Activated CD4-positive, alpha-beta T cell treated with anti-CD3 and anti-CD28 coated beads for 36 hours (primary cell): ENCODE measurements at regions of chr3 and their contacts with region 1.

Region 1: GRCh38 chr3:188749010-188749617 is 422.7 kb upstream of the TPRG1 start:
- DNase-seq: peak; percentile 59
- ATAC-seq: no peak
- H3K4me3 Mint-ChIP-seq: no peak overlapping the region
- H3K27ac Mint-ChIP-seq: no peak overlapping the region
- H3K4me1 Mint-ChIP-seq: peaks cover 30% of the 10 kb centered on the region
- H3K27me3 Mint-ChIP-seq: no peaks in the 10 kb centered on the region

Region 2: DNA sequence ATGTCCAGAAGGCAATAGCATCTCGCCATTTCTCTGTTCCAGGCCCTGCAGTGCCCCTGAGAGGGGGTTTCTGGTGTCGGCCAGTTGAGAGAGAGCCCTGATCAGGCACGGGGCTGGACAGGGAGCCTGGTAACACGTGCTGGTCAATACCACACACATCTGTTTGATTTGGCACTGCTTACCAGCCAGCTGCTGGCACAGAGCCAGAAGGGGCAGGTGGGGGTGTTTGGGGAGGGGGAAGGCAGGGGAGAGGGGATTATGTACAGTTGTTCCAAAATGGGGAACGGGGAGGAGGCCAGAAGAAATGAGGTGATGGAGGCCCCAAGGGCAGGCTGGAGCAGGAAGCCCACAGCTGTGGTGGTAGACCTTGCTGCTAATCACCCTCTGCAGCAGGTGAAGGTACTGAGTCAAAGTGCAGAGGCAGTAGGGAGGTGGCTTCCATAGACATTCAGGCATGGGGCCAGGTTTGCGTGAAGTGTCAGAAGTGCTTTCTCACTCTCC is 748.7 kb before region 1 on chr3:
- CTCF ChIA-PET with region 1: no interaction called
- POLR2A ChIA-PET with region 1: no interaction called
- intact Hi-C with region 1: no loop called
- DNase-seq: peak; percentile 30
- ATAC-seq: no peak
- H3K4me3 Mint-ChIP-seq: no peak overlapping the region
- H3K27ac Mint-ChIP-seq: peak overlapping the region; percentile 84
- H3K4me1 Mint-ChIP-seq: peaks cover 35% of the 10 kb centered on the region
- H3K27me3 Mint-ChIP-seq: no peaks in the 10 kb centered on the region

Region 3: GRCh38 chr3:188320757-188321156 is 428.4 kb before region 1 on chr3:
- CTCF ChIA-PET with region 1: interaction called, 5 read pairs
- POLR2A ChIA-PET with region 1: no interaction called
- intact Hi-C with region 1: loop called in 1 of 2 experiments (anchors 1 kb)
- DNase-seq: no peak
- ATAC-seq: no peak
- H3K4me3 Mint-ChIP-seq: no peak overlapping the region
- H3K27ac Mint-ChIP-seq: no peak overlapping the region
- H3K4me1 Mint-ChIP-seq: peaks cover 63% of the 10 kb centered on the region
- H3K27me3 Mint-ChIP-seq: peaks cover 3% of the 10 kb centered on the region

Region 4: GRCh38 chr3:188584162-188584529 is 165.0 kb before region 1 on chr3:
- CTCF ChIA-PET with region 1: no interaction called
- POLR2A ChIA-PET with region 1: no interaction called
- intact Hi-C with region 1: loop called (anchors 1 to 5 kb)
- DNase-seq: peak; percentile 43
- ATAC-seq: peak; percentile 60
- H3K4me3 Mint-ChIP-seq: no peak overlapping the region
- H3K27ac Mint-ChIP-seq: no peak overlapping the region
- H3K4me1 Mint-ChIP-seq: peaks cover 12% of the 10 kb centered on the region
- H3K27me3 Mint-ChIP-seq: no peaks in the 10 kb centered on the region

Region 5: DNA sequence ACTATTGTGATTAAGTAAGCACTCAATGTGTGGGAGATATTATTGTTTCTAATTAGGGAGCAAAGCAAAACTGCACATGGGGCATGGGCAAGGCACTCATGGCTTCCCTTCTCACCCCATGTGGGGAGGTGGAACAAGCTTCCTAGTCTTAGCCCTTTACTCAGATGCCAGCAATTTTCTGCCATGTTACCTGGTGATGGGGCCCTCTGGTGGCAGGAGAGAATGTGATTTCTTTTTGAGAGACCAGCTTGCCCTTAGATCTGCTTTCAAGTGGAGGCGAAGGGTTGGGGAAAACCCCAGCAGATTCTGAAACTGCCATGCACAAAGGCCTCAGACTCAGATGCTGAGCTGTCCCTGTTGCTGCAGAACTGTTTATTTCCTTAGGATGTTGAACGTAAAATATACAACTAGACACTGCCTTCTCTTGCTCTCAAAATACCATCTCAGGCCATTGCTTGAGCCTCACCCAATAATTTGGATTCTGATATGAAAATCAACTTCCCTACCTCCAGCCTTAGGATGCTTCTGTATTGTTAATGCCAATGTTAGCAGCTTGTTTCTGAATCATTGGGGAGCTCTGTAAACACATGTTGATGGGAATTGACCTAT is 292.5 kb after region 1 on chr3:
- CTCF ChIA-PET with region 1: no interaction called
- POLR2A ChIA-PET with region 1: no interaction called
- intact Hi-C with region 1: loop called in 1 of 2 experiments (anchors 1 kb)
- DNase-seq: peak; percentile 87
- ATAC-seq: peak; percentile 93
- H3K4me3 Mint-ChIP-seq: no peak overlapping the region
- H3K27ac Mint-ChIP-seq: no peak overlapping the region
- H3K4me1 Mint-ChIP-seq: peaks cover 36% of the 10 kb centered on the region
- H3K27me3 Mint-ChIP-seq: peaks cover 6% of the 10 kb centered on the region